Ascending aorta (tissue), 2 donors: ENCODE measurements at regions of chr5 and their contacts with region 1.

Region 1: GRCh38 chr5:177303121-177303924 is at the starts of genes PRELID1 and RAB24:
- DNase-seq: peak in 1 of 2 donors; percentile 94
- H3K4me3 ChIP-seq: peak within 1 kb of the TSS; percentile 72 to 90
- H3K27ac ChIP-seq: peak within 1 kb of the TSS; percentile 80 to 88
- H3K4me1 ChIP-seq: peaks cover 3 to 31% of the 10 kb centered on the region in 2 donors
- H3K27me3 ChIP-seq: no peaks in the 10 kb centered on the region
- CTCF ChIP-seq: peak in 2 of 3 experiments; percentile 30 to 43
- total RNA-seq, gene PRELID1: 376 TPM
- total RNA-seq, gene RAB24: 68.8 TPM

Region 2: GRCh38 chr5:177133091-177133852 is 170.1 kb before region 1 on chr5 and contains the start of gene NSD1:
- intact Hi-C with region 1: loop called (anchors 5 kb)
- DNase-seq: peak; percentile 60 to 91
- H3K4me3 ChIP-seq: peak within 1 kb of the TSS; percentile 77 to 89
- H3K27ac ChIP-seq: peak within 1 kb of the TSS; percentile 87 to 95
- H3K4me1 ChIP-seq: peaks cover 9 to 36% of the 10 kb centered on the region in 2 donors
- H3K27me3 ChIP-seq: no peaks in the 10 kb centered on the region
- CTCF ChIP-seq: no peak
- total RNA-seq, gene NSD1: 22.7 TPM

Region 3: GRCh38 chr5:177599731-177600507 is 296.6 kb after region 1 on chr5 and contains the start of gene B4GALT7:
- intact Hi-C with region 1: loop called (anchors 5 kb)
- DNase-seq: peak in 1 of 2 donors; percentile 90
- H3K4me3 ChIP-seq: peak within 1 kb of the TSS; percentile 97 to 98
- H3K27ac ChIP-seq: peak within 1 kb of the TSS; percentile 84 to 92
- H3K4me1 ChIP-seq: peaks cover 8 to 12% of the 10 kb centered on the region in 2 donors
- H3K27me3 ChIP-seq: no peaks in the 10 kb centered on the region
- CTCF ChIP-seq: peak in 1 of 3 experiments; percentile 26
- total RNA-seq, gene B4GALT7: 25.7 TPM